Ascending aorta (tissue), 2 donors: ENCODE measurements at regions of chr17 and their contacts with region 1.

Region 1: DNA sequence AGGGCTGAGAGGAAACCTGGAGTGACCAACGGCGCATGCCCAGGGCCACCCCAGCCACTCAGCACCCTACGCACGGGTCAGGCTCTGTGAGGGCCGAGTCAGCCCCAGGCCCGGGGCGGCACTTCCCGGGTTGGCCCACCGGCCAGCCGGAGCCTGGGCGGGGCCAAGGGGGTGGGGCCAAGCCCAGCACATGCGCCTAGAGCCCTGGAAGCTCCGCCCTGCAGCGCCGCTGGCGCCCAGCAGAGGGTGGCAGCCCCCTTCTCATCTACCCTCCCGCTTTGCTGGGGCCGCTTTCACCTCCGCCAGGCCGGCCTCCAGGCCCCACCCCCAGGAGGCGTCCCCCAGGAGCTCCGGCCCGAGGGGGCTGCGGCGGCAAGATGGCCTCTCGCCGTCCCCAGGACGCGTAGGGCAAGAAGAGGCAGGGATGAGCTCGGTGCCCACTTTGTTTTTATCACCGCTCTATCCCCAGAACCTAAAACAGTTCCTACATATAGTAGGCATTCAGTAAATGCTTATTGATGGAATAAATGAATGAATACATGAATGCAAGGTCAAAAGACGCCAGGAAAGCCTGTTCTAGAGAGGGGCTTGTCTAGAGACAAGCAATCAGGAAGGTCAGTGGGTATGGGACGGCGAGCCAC is 31.3 kb downstream of the MYO18A start:
- DNase-seq: peak; percentile 88 to 98
- H3K4me3 ChIP-seq: peak overlapping the region; percentile 57 to 59
- H3K27ac ChIP-seq: peak overlapping the region; percentile 62 to 76
- H3K4me1 ChIP-seq: peaks cover 0 to 18% of the 10 kb centered on the region in 2 donors
- H3K27me3 ChIP-seq: no peaks in the 10 kb centered on the region
- CTCF ChIP-seq: peak; percentile 97 to 99 (median 99)

Region 2: DNA sequence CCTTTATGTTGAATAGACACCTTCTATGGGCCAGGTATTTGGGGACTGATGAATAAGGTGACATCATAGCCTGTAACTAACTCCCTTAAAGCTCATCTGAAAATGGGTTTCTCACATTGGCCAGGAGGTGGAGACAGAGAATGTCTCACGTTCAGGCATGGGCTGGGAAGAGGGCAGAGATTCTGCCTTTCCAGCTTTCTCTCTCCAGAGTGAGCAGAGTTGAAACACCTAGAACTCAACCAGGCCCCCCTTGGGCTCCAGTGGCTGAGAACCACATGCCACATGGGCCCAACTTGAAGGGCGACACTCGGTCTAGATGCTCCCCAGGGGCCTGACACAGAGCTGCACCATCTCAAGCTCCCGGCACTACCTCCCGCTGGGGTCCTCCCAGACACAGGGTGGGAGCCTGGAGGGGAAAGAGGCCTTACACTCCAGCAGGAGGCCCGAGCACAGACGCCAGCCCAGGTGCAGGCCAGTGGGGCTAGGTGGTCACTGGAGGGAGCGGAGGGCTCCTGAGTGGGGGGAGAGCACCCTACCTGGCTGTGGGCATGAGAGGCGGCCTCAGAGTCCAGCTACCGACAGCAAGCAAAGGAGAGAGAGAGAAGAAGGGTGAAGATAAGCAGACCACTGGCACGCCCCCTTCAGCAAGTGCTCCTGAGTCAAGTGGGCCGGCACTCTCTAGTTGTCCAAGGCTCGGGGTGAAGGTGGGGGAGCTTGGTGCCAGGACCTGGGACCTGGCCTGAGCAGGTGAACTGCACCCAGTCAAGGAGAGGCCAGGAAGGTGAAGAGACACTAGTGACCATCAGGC is 24.6 kb before region 1 on chr17:
- intact Hi-C with region 1: loop called (anchors 2 kb)
- DNase-seq: no peak
- H3K4me3 ChIP-seq: no peak overlapping the region
- H3K27ac ChIP-seq: peak overlapping the region in 1 of 2 donors; percentile 4
- H3K4me1 ChIP-seq: peaks cover 0 to 11% of the 10 kb centered on the region in 2 donors
- H3K27me3 ChIP-seq: no peaks in the 10 kb centered on the region
- CTCF ChIP-seq: peak; percentile 45 to 74 (median 68)

Region 3: GRCh38 chr17:29180034-29180787 is 31.3 kb after region 1 on chr17 and contains the start of gene MYO18A:
- intact Hi-C with region 1: loop called (anchors 1 kb)
- DNase-seq: peak in 1 of 2 donors; percentile 87
- H3K4me3 ChIP-seq: peak within 1 kb of the TSS; percentile 57 to 82
- H3K27ac ChIP-seq: peak within 1 kb of the TSS; percentile 79 to 93
- H3K4me1 ChIP-seq: peaks cover 12 to 30% of the 10 kb centered on the region in 2 donors
- H3K27me3 ChIP-seq: no peaks in the 10 kb centered on the region
- CTCF ChIP-seq: peak; percentile 80 to 98 (median 88)
- total RNA-seq, gene MYO18A: 185 TPM

Region 4: GRCh38 chr17:29219378-29220047 is 70.6 kb after region 1 on chr17:
- intact Hi-C with region 1: loop called (anchors 1 kb)
- DNase-seq: peak in 1 of 2 donors; percentile 89
- H3K4me3 ChIP-seq: no peak overlapping the region
- H3K27ac ChIP-seq: no peak overlapping the region
- H3K4me1 ChIP-seq: peaks cover 3 to 10% of the 10 kb centered on the region in 2 donors
- H3K27me3 ChIP-seq: no peaks in the 10 kb centered on the region
- CTCF ChIP-seq: peak; percentile 89 to 98 (median 97)

Region 5: DNA sequence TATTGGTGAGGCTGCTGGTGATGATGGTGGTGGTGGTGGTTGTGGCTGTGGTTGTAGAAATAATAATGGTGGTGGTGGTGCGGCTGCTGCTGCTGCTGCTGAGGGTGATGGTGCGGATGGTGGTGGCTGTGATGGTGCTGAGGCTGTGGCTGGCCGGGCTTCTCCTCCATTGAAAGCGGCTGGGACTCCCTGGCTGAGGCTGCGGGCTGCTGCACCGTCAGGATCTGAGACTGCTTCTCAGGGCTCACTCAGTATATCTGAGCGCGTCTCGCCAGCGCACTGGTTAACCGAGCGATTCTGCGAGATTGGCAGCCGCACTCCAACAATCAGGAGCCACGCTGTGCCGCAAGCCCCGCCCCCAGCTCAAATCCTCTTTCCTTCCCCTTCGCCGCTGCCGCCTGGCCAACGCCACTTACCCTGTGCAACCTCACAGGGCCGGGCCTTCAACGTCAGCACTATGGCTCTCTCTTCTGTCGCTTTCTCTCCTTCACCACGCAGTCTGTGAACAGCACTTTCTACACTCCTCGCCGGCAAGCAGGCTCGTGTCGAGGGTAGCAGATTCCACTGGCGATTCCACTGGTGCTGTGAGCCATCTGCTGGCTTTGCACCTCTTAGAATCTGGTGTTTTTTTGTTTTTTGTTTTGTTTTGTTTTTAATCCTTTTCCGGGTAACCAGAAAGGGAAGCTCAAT is 145.1 kb after region 1 on chr17 and contains the start of gene NUFIP2:
- intact Hi-C with region 1: loop called (anchors 1 kb)
- DNase-seq: peak; percentile 96 to 99
- H3K4me3 ChIP-seq: peak within 1 kb of the TSS; percentile 82 to 89
- H3K27ac ChIP-seq: peak within 1 kb of the TSS; percentile 95 to 96
- H3K4me1 ChIP-seq: peaks cover 9 to 15% of the 10 kb centered on the region in 2 donors
- H3K27me3 ChIP-seq: no peaks in the 10 kb centered on the region
- CTCF ChIP-seq: peak in 1 of 3 experiments; percentile 16
- total RNA-seq, gene NUFIP2: 11.0 TPM

Region 6: DNA sequence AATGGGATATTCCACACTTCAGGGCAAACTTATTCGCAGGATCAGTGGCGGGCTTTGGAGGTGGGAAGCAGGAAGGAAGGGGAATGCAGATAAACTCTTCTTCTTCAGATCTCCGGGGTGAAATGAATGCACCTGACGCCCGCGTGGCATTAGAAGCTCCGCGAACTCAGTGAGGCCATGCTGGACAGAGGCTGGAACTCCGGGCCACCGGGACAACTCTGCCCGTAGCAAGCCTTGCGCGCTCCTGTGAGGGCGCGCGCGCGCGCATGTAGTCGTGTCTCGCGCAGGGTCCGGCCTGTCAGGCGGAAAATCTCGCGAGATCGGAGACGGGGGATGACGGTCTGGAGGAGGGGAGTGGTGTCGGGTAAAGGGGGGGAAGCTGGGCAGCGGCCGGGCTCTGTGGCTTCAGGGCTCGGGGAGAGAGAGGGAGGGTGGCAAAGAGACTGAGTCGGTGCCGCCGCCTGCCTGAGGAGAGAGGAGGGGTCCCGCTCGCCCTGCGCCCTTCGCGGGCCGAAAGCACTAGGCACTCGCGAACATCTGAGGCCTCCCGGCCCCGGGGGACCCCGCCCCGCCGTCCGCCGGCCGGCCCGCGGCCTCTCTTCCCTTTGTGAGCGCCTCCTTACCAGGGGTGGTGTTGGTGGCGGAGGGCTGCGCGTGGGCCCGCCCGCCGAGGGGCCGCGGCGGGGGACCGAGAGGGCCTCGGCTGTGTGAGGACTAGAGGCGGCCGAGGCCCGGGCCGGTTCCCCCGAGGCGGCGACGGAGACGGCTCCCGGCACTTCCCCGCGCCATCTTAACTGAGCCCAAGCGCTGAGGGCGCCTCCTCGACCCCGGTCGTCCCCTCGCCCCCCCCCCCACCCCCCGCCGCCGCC is 241.3 kb after region 1 on chr17 and contains the start of gene TAOK1:
- intact Hi-C with region 1: loop called (anchors 10 kb)
- DNase-seq: peak; percentile 95 to 100
- H3K4me3 ChIP-seq: peak within 1 kb of the TSS; percentile 92 to 98
- H3K27ac ChIP-seq: peak within 1 kb of the TSS; percentile 97 to 98
- H3K4me1 ChIP-seq: peaks cover 5 to 15% of the 10 kb centered on the region in 2 donors
- H3K27me3 ChIP-seq: no peaks in the 10 kb centered on the region
- CTCF ChIP-seq: no peak
- total RNA-seq, gene TAOK1: 20.8 TPM

Region 7: DNA sequence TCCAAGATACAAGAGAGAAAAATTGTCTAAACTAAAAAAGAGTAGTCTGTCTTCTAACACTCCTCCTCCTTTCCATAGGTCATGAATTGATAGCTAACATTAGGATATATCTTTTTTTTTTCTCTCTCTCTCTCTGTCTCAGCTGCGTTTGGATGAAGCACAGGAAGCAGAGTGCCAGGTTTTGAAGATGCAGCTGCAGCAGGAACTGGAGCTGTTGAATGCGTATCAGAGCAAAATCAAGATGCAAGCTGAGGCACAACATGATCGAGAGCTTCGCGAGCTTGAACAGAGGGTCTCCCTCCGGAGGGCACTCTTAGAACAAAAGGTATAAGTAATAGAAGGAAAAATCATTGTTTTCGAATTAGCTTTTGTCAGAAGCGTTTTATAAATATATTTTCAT is 385.1 kb after region 1 on chr17:
- intact Hi-C with region 1: loop called (anchors 10 kb)
- DNase-seq: no peak
- H3K4me3 ChIP-seq: no peak overlapping the region
- H3K27ac ChIP-seq: no peak overlapping the region
- H3K4me1 ChIP-seq: no peaks in the 10 kb centered on the region
- H3K27me3 ChIP-seq: no peaks in the 10 kb centered on the region
- CTCF ChIP-seq: no peak